ENCODE measurements at regions of chr17 and their contacts with region 1.

Region 1: GRCh38 chr17:37609170-37610040 is at the start of gene SYNRG:
- DNase-seq: peak; percentile 95 to 98 (median 97)
- H3K4me3 ChIP-seq: peak within 1 kb of the TSS; percentile 58
- H3K4me3 Mint-ChIP-seq: peak within 1 kb of the TSS; percentile 78 to 99 (median 85)
- H3K27ac ChIP-seq: peak within 1 kb of the TSS; percentile 63
- H3K27ac Mint-ChIP-seq: peak within 1 kb of the TSS; percentile 90 to 99 (median 94)
- H3K4me1 ChIP-seq: peaks cover 37% of the 10 kb centered on the region
- H3K4me1 Mint-ChIP-seq: peaks cover 33 to 48% (median 35%) of the 10 kb centered on the region in 3 donors
- H3K27me3 ChIP-seq: no peaks in the 10 kb centered on the region
- H3K27me3 Mint-ChIP-seq: no peaks in the 10 kb centered on the region
- total RNA-seq, gene SYNRG: 42.3 to 50.8 TPM

Region 2: DNA sequence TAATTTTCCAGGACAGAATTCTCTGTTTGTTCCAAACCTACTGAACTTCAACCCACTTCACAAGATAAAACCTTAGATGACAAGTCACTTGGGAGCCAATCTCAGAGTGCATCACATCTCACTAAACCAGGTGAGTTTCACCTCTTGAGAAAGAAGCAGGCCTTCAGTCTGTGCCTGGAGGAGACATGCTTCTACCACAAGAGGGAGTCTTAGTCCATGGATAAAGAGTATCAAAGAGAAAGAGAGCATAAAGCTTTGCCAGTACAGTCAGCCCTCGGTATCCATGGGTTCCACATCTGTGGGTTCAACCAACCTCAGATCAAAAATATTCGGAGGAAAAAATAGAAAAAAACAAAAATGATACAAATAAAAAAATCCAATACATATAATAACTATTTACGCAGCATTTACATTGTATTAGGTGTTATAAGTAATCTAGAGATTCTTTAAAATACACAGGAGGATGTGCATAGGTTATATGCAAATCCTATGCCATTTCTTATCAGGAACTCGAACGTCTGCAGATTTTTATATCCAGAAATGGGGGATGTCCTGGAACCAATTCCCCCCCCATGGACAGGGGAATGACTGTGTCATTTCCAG is 82.1 kb before region 1 on chr17:
- CTCF ChIA-PET with region 1: interaction called, 18 read pairs
- POLR2A ChIA-PET with region 1: interaction called, 3 read pairs
- DNase-seq: peak in 2 of 5 donors; percentile 37 to 45
- H3K4me3 ChIP-seq: no peak overlapping the region
- H3K4me3 Mint-ChIP-seq: no peak overlapping the region
- H3K27ac ChIP-seq: no peak overlapping the region
- H3K27ac Mint-ChIP-seq: peak overlapping the region; percentile 7 to 89 (median 32)
- H3K4me1 ChIP-seq: no peaks in the 10 kb centered on the region
- H3K4me1 Mint-ChIP-seq: peaks cover 8 to 13% (median 11%) of the 10 kb centered on the region in 3 donors
- H3K27me3 ChIP-seq: no peaks in the 10 kb centered on the region
- H3K27me3 Mint-ChIP-seq: no peaks in the 10 kb centered on the region

Region 3: GRCh38 chr17:37571674-37572073 is 37.7 kb before region 1 on chr17:
- CTCF ChIA-PET with region 1: no interaction called
- POLR2A ChIA-PET with region 1: no interaction called
- DNase-seq: no peak
- H3K4me3 ChIP-seq: no peak overlapping the region
- H3K4me3 Mint-ChIP-seq: no peak overlapping the region
- H3K27ac ChIP-seq: no peak overlapping the region
- H3K27ac Mint-ChIP-seq: no peak overlapping the region
- H3K4me1 ChIP-seq: no peaks in the 10 kb centered on the region
- H3K4me1 Mint-ChIP-seq: peaks cover 17 to 41% (median 36%) of the 10 kb centered on the region in 3 donors
- H3K27me3 ChIP-seq: no peaks in the 10 kb centered on the region
- H3K27me3 Mint-ChIP-seq: no peaks in the 10 kb centered on the region

Region 4: DNA sequence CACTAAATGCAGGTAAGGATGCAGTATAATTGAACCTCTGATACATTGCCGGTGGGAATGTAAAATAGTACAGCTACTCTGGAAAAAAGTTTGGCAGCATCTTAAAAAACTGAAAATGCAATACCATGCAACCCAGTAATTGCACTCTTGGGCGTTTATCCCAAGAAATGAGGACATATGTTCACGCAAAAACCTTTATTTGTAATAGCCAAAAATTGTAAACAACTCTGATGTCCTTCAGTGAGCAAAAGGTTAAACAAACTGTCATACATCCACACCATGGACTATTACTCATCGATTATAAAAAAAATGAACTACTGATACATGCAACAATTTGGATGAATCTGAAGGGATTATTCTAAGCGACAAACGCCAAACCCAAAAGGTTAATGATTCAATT is 17.1 kb before region 1 on chr17:
- CTCF ChIA-PET with region 1: interaction called, 43 read pairs
- POLR2A ChIA-PET with region 1: interaction called, 6 read pairs
- DNase-seq: no peak
- H3K4me3 ChIP-seq: no peak overlapping the region
- H3K4me3 Mint-ChIP-seq: peak overlapping the region in 4 of 7 donors; percentile 5 to 33 (median 22)
- H3K27ac ChIP-seq: no peak overlapping the region
- H3K27ac Mint-ChIP-seq: peak overlapping the region in 7 of 8 donors; percentile 1 to 78 (median 38)
- H3K4me1 ChIP-seq: peaks cover 14% of the 10 kb centered on the region
- H3K4me1 Mint-ChIP-seq: peaks cover 62 to 91% (median 76%) of the 10 kb centered on the region in 3 donors
- H3K27me3 ChIP-seq: no peaks in the 10 kb centered on the region
- H3K27me3 Mint-ChIP-seq: no peaks in the 10 kb centered on the region

Region 5: DNA sequence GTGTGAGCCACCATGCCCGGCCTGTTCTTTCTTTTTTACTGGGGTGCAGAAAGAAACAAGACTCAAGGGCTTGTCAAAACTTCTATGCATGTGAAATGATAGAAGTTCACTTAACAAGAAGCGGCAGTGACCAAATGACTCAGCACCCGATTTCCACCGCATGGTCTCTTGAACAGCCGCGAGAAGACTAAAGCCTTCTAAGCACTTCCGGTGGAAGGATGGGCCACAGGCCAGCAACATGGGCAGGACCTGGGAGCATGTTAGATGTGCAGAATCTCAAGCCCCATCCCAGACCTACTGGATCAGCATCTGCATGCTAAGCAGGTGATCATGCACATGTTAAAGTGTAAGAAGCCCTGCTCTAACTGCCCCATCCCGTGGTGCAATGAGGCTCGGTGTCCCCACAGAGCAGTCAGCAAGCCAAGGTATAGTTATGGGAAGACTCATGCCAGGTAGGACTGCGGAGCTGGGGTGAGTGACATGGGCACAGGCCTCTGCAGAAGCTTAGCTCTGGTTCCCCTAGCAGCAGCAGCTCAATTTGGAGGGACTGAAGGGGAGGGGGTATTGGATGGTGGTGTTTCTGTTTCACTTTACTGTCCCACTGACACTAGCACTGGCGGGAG is 223.9 kb after region 1 on chr17:
- CTCF ChIA-PET with region 1: no interaction called
- POLR2A ChIA-PET with region 1: no interaction called
- DNase-seq: no peak
- H3K4me3 ChIP-seq: no peak overlapping the region
- H3K4me3 Mint-ChIP-seq: peak overlapping the region in 2 of 7 donors; percentile 5 to 46
- H3K27ac ChIP-seq: no peak overlapping the region
- H3K27ac Mint-ChIP-seq: no peak overlapping the region
- H3K4me1 ChIP-seq: no peaks in the 10 kb centered on the region
- H3K4me1 Mint-ChIP-seq: peaks cover 3 to 10% (median 7%) of the 10 kb centered on the region in 3 donors
- H3K27me3 ChIP-seq: no peaks in the 10 kb centered on the region
- H3K27me3 Mint-ChIP-seq: peaks cover 11 to 22% of the 10 kb centered on the region in 2 donors